ENCODE measurements at regions of chr11 and their contacts with region 1.

Region 1: GRCh38 chr11:96389720-96390487 is at the starts of genes CCDC82 and JRKL:
- DNase-seq: peak; percentile 96 to 99 (median 98)
- ATAC-seq: peak; percentile 96
- H3K4me3 ChIP-seq: peak within 1 kb of the TSS; percentile 86
- H3K4me3 Mint-ChIP-seq: peak within 1 kb of the TSS; percentile 91
- H3K27ac ChIP-seq: peak within 1 kb of the TSS; percentile 84
- H3K27ac Mint-ChIP-seq: peak within 1 kb of the TSS; percentile 88
- H3K4me1 ChIP-seq: peaks cover 18% of the 10 kb centered on the region
- H3K4me1 Mint-ChIP-seq: peaks cover 51% of the 10 kb centered on the region
- H3K27me3 ChIP-seq: no peaks in the 10 kb centered on the region
- H3K27me3 Mint-ChIP-seq: no peaks in the 10 kb centered on the region
- CTCF ChIP-seq: no peak
- total RNA-seq, gene CCDC82: 23.7 to 24.4 TPM
- total RNA-seq, gene JRKL: 3.0 to 3.5 TPM

Region 2: GRCh38 chr11:95089620-95090542 is 1300.0 kb before region 1 on chr11 and contains the start of gene ENDOD1:
- CTCF ChIA-PET with region 1: no interaction called
- POLR2A ChIA-PET with region 1: interaction called, 8 read pairs
- intact Hi-C with region 1: loop called in 1 of 2 experiments (anchors 5 kb)
- DNase-seq: peak; percentile 70 to 94 (median 84)
- ATAC-seq: peak; percentile 94
- H3K4me3 ChIP-seq: peak within 1 kb of the TSS; percentile 78
- H3K4me3 Mint-ChIP-seq: peak within 1 kb of the TSS; percentile 92
- H3K27ac ChIP-seq: peak within 1 kb of the TSS; percentile 77 to 84
- H3K27ac Mint-ChIP-seq: peak within 1 kb of the TSS; percentile 95
- H3K4me1 ChIP-seq: peaks cover 34% of the 10 kb centered on the region
- H3K4me1 Mint-ChIP-seq: peaks cover 50% of the 10 kb centered on the region
- H3K27me3 ChIP-seq: no peaks in the 10 kb centered on the region
- H3K27me3 Mint-ChIP-seq: no peaks in the 10 kb centered on the region
- CTCF ChIP-seq: no peak
- total RNA-seq, gene ENDOD1: 3.8 to 4.4 TPM

Region 3: GRCh38 chr11:95835768-95836488 is 554.0 kb before region 1 on chr11:
- CTCF ChIA-PET with region 1: interaction called, 13 read pairs
- POLR2A ChIA-PET with region 1: interaction called, 8 read pairs
- intact Hi-C with region 1: loop called (anchors 1 kb)
- DNase-seq: peak; percentile 23 to 75 (median 40)
- ATAC-seq: peak; percentile 99
- H3K4me3 ChIP-seq: no peak overlapping the region
- H3K4me3 Mint-ChIP-seq: no peak overlapping the region
- H3K27ac ChIP-seq: no peak overlapping the region
- H3K27ac Mint-ChIP-seq: no peak overlapping the region
- H3K4me1 ChIP-seq: no peaks in the 10 kb centered on the region
- H3K4me1 Mint-ChIP-seq: no peaks in the 10 kb centered on the region
- H3K27me3 ChIP-seq: no peaks in the 10 kb centered on the region
- H3K27me3 Mint-ChIP-seq: no peaks in the 10 kb centered on the region
- CTCF ChIP-seq: peak; percentile 94

Region 4: DNA sequence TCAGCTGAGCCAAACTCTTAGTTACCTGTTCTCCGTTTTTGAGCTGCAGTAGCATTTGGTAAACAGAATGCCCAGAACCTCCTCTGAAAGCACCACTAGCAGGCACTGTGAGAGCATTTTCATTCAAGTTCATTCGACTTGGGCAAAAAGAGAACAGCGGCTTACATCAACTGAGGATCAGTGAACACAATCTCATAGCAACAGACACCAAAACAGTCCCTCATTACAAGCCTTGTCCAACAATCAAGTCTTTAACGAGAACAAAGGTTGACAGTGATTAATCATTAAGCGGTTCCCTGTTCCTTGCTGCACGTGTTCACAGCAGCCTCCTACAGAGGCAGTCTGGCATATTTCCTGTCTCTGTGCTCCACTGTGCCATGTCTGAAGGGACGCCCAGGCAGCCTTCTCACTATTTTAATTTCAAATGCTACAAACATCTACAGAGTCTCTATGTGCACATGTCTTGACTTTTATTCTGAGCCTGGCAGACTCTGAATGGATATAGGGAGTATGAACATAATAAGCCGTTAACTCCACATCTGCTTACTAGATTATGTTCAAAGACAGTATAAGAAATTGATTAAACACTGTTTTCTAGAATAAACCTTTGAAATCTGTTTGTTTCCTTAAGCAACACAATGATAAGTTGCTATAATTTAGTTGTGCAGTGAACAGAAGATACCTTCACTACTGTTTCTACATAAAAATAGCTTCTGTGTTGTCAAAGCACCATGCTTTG is 377.6 kb before region 1 on chr11:
- CTCF ChIA-PET with region 1: interaction called, 4 read pairs
- POLR2A ChIA-PET with region 1: interaction called, 6 read pairs
- intact Hi-C with region 1: loop called in 1 of 2 experiments (anchors 1 kb)
- DNase-seq: peak; percentile 34 to 89 (median 57)
- ATAC-seq: peak; percentile 75
- H3K4me3 ChIP-seq: peak overlapping the region; percentile 24
- H3K4me3 Mint-ChIP-seq: peak overlapping the region; percentile 54
- H3K27ac ChIP-seq: peak overlapping the region; percentile 10 to 82
- H3K27ac Mint-ChIP-seq: no peak overlapping the region
- H3K4me1 ChIP-seq: peaks cover 33% of the 10 kb centered on the region
- H3K4me1 Mint-ChIP-seq: peaks cover 21% of the 10 kb centered on the region
- H3K27me3 ChIP-seq: no peaks in the 10 kb centered on the region
- H3K27me3 Mint-ChIP-seq: no peaks in the 10 kb centered on the region
- CTCF ChIP-seq: peak; percentile 39

Region 5: GRCh38 chr11:96054870-96055705 is 334.8 kb before region 1 on chr11:
- CTCF ChIA-PET with region 1: interaction called, 4 read pairs
- POLR2A ChIA-PET with region 1: interaction called, 3 read pairs
- intact Hi-C with region 1: loop called in 1 of 2 experiments (anchors 2 kb)
- DNase-seq: peak in 3 of 14 experiments; percentile 55 to 57 (median 57)
- ATAC-seq: peak; percentile 76
- H3K4me3 ChIP-seq: no peak overlapping the region
- H3K4me3 Mint-ChIP-seq: no peak overlapping the region
- H3K27ac ChIP-seq: no peak overlapping the region
- H3K27ac Mint-ChIP-seq: peak overlapping the region; percentile 26
- H3K4me1 ChIP-seq: peaks cover 2% of the 10 kb centered on the region
- H3K4me1 Mint-ChIP-seq: peaks cover 83% of the 10 kb centered on the region
- H3K27me3 ChIP-seq: no peaks in the 10 kb centered on the region
- H3K27me3 Mint-ChIP-seq: no peaks in the 10 kb centered on the region
- CTCF ChIP-seq: peak; percentile 65

Region 6: GRCh38 chr11:96481771-96482170 is 91.9 kb after region 1 on chr11:
- CTCF ChIA-PET with region 1: no interaction called
- POLR2A ChIA-PET with region 1: no interaction called
- intact Hi-C with region 1: no loop called
- DNase-seq: no peak
- ATAC-seq: no peak
- H3K4me3 ChIP-seq: no peak overlapping the region
- H3K4me3 Mint-ChIP-seq: no peak overlapping the region
- H3K27ac ChIP-seq: no peak overlapping the region
- H3K27ac Mint-ChIP-seq: no peak overlapping the region
- H3K4me1 ChIP-seq: no peaks in the 10 kb centered on the region
- H3K4me1 Mint-ChIP-seq: no peaks in the 10 kb centered on the region
- H3K27me3 ChIP-seq: peaks cover 5 to 7% of the 10 kb centered on the region in 2 experiments
- H3K27me3 Mint-ChIP-seq: peaks cover 34% of the 10 kb centered on the region
- CTCF ChIP-seq: no peak

Measured in CD4-positive, alpha-beta T cell (primary cell).